CD4-positive, alpha-beta memory T cell (primary cell): ENCODE measurements at regions of chr3 and their contacts with region 1.

Region 1: GRCh38 chr3:153640689-153641301 is 478.8 kb downstream of the RAP2B start:
- DNase-seq: peak in 1 of 5 donors; percentile 36
- H3K4me3 ChIP-seq: no peak overlapping the region
- H3K4me3 Mint-ChIP-seq: no peak overlapping the region
- H3K27ac ChIP-seq: no peak overlapping the region
- H3K27ac Mint-ChIP-seq: peak overlapping the region in 3 of 7 donors; percentile 12 to 63 (median 18)
- H3K4me1 ChIP-seq: peaks cover 41% of the 10 kb centered on the region
- H3K4me1 Mint-ChIP-seq: peaks cover 39 to 56% (median 40%) of the 10 kb centered on the region in 4 donors
- H3K27me3 ChIP-seq: no peaks in the 10 kb centered on the region
- H3K27me3 Mint-ChIP-seq: no peaks in the 10 kb centered on the region

Region 2: DNA sequence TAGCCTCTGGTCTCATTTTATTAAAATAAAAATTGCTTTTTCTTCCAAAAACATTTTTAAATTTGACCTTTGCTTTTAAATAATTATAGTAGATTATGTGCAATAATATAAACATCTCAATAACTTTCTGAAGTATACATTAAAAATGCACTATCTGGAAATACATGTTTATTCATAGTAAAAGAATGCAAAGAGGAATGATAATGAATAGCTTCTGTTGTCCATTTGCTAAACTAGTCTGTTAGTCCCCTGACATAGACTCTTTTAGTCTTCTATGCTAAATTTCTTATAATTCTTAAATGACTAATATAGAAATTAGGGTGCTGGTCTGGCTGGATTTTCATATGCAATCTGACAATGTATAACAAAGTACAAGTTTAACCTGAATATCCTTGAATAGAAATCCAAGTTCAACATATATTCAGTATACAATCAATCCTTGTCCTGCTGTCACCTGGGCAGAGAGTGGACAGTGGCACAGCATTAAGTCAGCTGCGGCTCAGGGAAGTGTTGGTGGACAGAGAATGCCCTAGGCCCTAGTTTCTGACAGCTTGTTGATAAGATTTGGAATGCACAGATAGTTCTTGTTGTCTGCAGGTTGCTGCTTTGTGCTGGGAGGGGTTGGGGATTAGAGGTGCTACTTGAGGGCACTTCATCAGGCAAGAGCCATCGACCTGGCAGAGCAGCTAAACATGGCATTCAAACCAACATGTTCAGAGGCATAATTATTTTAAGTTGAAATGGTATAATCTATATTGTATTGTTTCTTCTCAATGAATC is 1210.4 kb before region 1 on chr3:
- CTCF ChIA-PET with region 1: no interaction called
- POLR2A ChIA-PET with region 1: no interaction called
- intact Hi-C with region 1: no loop called
- DNase-seq: no peak
- H3K4me3 ChIP-seq: no peak overlapping the region
- H3K4me3 Mint-ChIP-seq: no peak overlapping the region
- H3K27ac ChIP-seq: no peak overlapping the region
- H3K27ac Mint-ChIP-seq: peak overlapping the region; percentile 54 to 91 (median 80)
- H3K4me1 ChIP-seq: peaks cover 36% of the 10 kb centered on the region
- H3K4me1 Mint-ChIP-seq: peaks cover 39 to 59% (median 50%) of the 10 kb centered on the region in 4 donors
- H3K27me3 ChIP-seq: no peaks in the 10 kb centered on the region
- H3K27me3 Mint-ChIP-seq: no peaks in the 10 kb centered on the region

Region 3: GRCh38 chr3:153513236-153513635 is 127.6 kb before region 1 on chr3:
- CTCF ChIA-PET with region 1: interaction called, 23 read pairs
- POLR2A ChIA-PET with region 1: no interaction called
- intact Hi-C with region 1: no loop called
- DNase-seq: peak in 4 of 5 donors; percentile 12 to 20 (median 12)
- H3K4me3 ChIP-seq: no peak overlapping the region
- H3K4me3 Mint-ChIP-seq: no peak overlapping the region
- H3K27ac ChIP-seq: no peak overlapping the region
- H3K27ac Mint-ChIP-seq: no peak overlapping the region
- H3K4me1 ChIP-seq: no peaks in the 10 kb centered on the region
- H3K4me1 Mint-ChIP-seq: peaks cover 0 to 4% (median 1%) of the 10 kb centered on the region in 4 donors
- H3K27me3 ChIP-seq: no peaks in the 10 kb centered on the region
- H3K27me3 Mint-ChIP-seq: peaks cover 0 to 2% of the 10 kb centered on the region in 2 donors

Region 4: DNA sequence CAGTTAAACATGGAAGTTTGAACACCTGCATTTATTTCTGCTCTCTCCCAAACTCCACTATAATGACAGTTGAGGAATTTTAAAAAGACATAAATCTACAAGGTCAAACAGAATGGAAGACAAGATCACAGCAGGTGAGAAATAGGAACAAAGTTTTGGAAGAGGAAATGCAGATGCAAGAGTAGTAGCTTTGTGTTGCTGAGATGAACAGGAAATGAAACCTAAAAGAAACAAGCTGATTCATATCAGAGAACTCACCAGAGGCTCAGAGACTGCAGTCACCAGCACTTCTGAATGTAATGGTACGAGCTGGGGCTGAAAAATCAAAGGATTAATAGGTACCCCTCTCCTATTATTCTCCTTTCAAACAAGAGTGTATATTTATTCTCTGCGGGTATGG is 18.8 kb before region 1 on chr3:
- CTCF ChIA-PET with region 1: interaction called, 29 read pairs
- POLR2A ChIA-PET with region 1: interaction called, 130 read pairs
- intact Hi-C with region 1: loop called (anchors 1 kb)
- DNase-seq: peak in 4 of 5 donors; percentile 21 to 40 (median 32)
- H3K4me3 ChIP-seq: peak overlapping the region in 1 of 2 donors; percentile 38
- H3K4me3 Mint-ChIP-seq: peak overlapping the region; percentile 46 to 84 (median 66)
- H3K27ac ChIP-seq: peak overlapping the region; percentile 14
- H3K27ac Mint-ChIP-seq: peak overlapping the region; percentile 43 to 92 (median 75)
- H3K4me1 ChIP-seq: peaks cover 60% of the 10 kb centered on the region
- H3K4me1 Mint-ChIP-seq: peaks cover 46 to 61% (median 55%) of the 10 kb centered on the region in 4 donors
- H3K27me3 ChIP-seq: no peaks in the 10 kb centered on the region
- H3K27me3 Mint-ChIP-seq: no peaks in the 10 kb centered on the region

Region 5: DNA sequence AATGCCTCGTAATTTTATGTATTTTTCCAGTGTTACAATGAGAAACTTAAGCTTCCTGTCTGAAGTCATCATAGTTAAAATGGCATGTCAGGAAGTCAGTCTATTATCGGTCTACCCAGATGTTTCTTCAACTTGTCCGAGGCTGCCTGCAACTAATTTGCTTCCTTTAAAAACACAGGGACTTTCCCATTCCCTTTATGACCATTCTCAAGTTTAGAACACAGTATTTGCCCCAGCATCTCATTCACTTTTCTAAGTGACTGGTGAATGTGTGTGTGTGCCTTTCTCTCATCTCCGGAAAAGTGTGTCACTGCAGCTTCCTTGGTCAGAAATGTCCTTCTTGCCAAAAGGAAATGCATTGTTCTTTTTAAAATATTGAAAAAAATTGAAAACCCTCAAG is 12.2 kb before region 1 on chr3:
- CTCF ChIA-PET with region 1: interaction called, 29 read pairs
- POLR2A ChIA-PET with region 1: interaction called, 130 read pairs
- intact Hi-C with region 1: loop called (anchors 1 kb)
- DNase-seq: peak in 2 of 5 donors; percentile 8 to 10
- H3K4me3 ChIP-seq: no peak overlapping the region
- H3K4me3 Mint-ChIP-seq: peak overlapping the region; percentile 12 to 82 (median 73)
- H3K27ac ChIP-seq: no peak overlapping the region
- H3K27ac Mint-ChIP-seq: peak overlapping the region; percentile 5 to 86 (median 58)
- H3K4me1 ChIP-seq: peaks cover 70% of the 10 kb centered on the region
- H3K4me1 Mint-ChIP-seq: peaks cover 55 to 81% (median 70%) of the 10 kb centered on the region in 4 donors
- H3K27me3 ChIP-seq: no peaks in the 10 kb centered on the region
- H3K27me3 Mint-ChIP-seq: no peaks in the 10 kb centered on the region